Prostate gland (tissue), 2 donors: ENCODE measurements at regions of chr9 and their contacts with region 1.

Region 1: GRCh38 chr9:106862825-106863720 is at the start of gene ZNF462:
- DNase-seq: peak; percentile 56
- H3K4me3 ChIP-seq: peak within 1 kb of the TSS; percentile 67 to 75
- H3K27ac ChIP-seq: peak within 1 kb of the TSS; percentile 87 to 89
- H3K4me1 ChIP-seq: no peaks in the 10 kb centered on the region
- H3K27me3 ChIP-seq: no peaks in the 10 kb centered on the region
- CTCF ChIP-seq: peak in 3 of 4 experiments; percentile 51 to 89 (median 88)
- POLR2A ChIP-seq: peak; percentile 36
- total RNA-seq, gene ZNF462: 41.4 to 54.4 TPM

Region 2: DNA sequence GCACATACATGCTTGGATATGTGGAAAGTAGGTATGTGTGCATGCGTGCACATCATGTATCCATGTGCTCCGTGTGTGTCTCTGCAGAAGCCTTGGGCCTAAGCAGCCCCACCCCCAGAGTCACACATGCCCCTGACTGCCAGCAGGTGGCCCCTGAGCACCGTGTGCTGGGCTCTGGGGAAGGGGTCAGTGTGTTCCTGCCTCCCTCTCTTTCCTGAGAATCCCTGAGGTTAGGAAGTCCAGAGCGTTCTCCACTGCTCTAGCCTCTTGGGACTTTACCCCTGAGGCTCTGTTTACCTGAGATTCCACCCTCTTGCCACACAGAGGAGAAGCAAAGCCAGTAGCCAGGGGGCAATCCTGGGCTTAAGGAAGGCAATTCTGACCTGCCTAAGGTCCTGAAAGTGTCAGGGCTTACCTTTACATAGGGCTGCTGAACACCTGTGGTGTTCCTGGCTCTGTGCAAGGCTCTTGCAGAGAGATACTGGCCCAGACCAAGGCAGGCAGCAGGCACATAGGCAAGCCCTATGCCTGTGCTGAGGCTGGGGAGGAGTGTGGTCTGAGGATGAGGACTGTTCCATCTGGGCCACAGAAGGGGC is 961.5 kb before region 1 on chr9:
- intact Hi-C with region 1: loop called (anchors 5 kb)
- DNase-seq: peak; percentile 41
- H3K4me3 ChIP-seq: no peak overlapping the region
- H3K27ac ChIP-seq: no peak overlapping the region
- H3K4me1 ChIP-seq: no peaks in the 10 kb centered on the region
- H3K27me3 ChIP-seq: no peaks in the 10 kb centered on the region
- CTCF ChIP-seq: peak; percentile 46 to 75 (median 71)
- POLR2A ChIP-seq: no peak

Region 3: GRCh38 chr9:106921341-106921899 is 58.3 kb after region 1 on chr9:
- intact Hi-C with region 1: loop called (anchors 5 kb)
- DNase-seq: no peak
- H3K4me3 ChIP-seq: no peak overlapping the region
- H3K27ac ChIP-seq: peak overlapping the region in 1 of 2 donors; percentile 42
- H3K4me1 ChIP-seq: no peaks in the 10 kb centered on the region
- H3K27me3 ChIP-seq: no peaks in the 10 kb centered on the region
- CTCF ChIP-seq: no peak
- POLR2A ChIP-seq: no peak

Region 4: GRCh38 chr9:107044872-107045271 is 181.8 kb after region 1 on chr9:
- intact Hi-C with region 1: loop called (anchors 10 kb)
- DNase-seq: no peak
- H3K4me3 ChIP-seq: no peak overlapping the region
- H3K27ac ChIP-seq: no peak overlapping the region
- H3K4me1 ChIP-seq: no peaks in the 10 kb centered on the region
- H3K27me3 ChIP-seq: no peaks in the 10 kb centered on the region
- CTCF ChIP-seq: no peak
- POLR2A ChIP-seq: no peak

Region 5: GRCh38 chr9:107172160-107172978 is 309.3 kb after region 1 on chr9:
- intact Hi-C with region 1: loop called (anchors 5 kb)
- DNase-seq: peak; percentile 72
- H3K4me3 ChIP-seq: no peak overlapping the region
- H3K27ac ChIP-seq: no peak overlapping the region
- H3K4me1 ChIP-seq: no peaks in the 10 kb centered on the region
- H3K27me3 ChIP-seq: no peaks in the 10 kb centered on the region
- CTCF ChIP-seq: peak; percentile 71 to 87 (median 85)
- POLR2A ChIP-seq: no peak

Region 6: GRCh38 chr9:107282753-107283625 is 419.9 kb after region 1 on chr9 and contains the start of gene RAD23B:
- intact Hi-C with region 1: loop called (anchors 10 kb)
- DNase-seq: peak; percentile 98
- H3K4me3 ChIP-seq: peak within 1 kb of the TSS; percentile 99 to 100
- H3K27ac ChIP-seq: peak within 1 kb of the TSS; percentile 99 to 100
- H3K4me1 ChIP-seq: peaks cover 3% of the 10 kb centered on the region
- H3K27me3 ChIP-seq: no peaks in the 10 kb centered on the region
- CTCF ChIP-seq: peak in 2 of 4 experiments; percentile 3 to 34
- POLR2A ChIP-seq: peak; percentile 89
- total RNA-seq, gene RAD23B: 92.3 to 111 TPM